Endothelial cell of umbilical vein (primary cell): ENCODE measurements at regions of chr1 and their contacts with region 1.

Region 1: GRCh38 chr1:39132505-39133339 is 71.8 kb upstream of the MACF1 start:
- DNase-seq: peak; percentile 97
- H3K4me3 ChIP-seq: peak overlapping the region in 1 of 3 experiments; percentile 38
- H3K27ac ChIP-seq: peak overlapping the region; percentile 98
- H3K4me1 ChIP-seq: peaks cover 68% of the 10 kb centered on the region
- H3K27me3 ChIP-seq: no peaks in the 10 kb centered on the region
- CTCF ChIP-seq: peak; percentile 68 to 75
- POLR2A ChIP-seq: peak; percentile 32

Region 2: DNA sequence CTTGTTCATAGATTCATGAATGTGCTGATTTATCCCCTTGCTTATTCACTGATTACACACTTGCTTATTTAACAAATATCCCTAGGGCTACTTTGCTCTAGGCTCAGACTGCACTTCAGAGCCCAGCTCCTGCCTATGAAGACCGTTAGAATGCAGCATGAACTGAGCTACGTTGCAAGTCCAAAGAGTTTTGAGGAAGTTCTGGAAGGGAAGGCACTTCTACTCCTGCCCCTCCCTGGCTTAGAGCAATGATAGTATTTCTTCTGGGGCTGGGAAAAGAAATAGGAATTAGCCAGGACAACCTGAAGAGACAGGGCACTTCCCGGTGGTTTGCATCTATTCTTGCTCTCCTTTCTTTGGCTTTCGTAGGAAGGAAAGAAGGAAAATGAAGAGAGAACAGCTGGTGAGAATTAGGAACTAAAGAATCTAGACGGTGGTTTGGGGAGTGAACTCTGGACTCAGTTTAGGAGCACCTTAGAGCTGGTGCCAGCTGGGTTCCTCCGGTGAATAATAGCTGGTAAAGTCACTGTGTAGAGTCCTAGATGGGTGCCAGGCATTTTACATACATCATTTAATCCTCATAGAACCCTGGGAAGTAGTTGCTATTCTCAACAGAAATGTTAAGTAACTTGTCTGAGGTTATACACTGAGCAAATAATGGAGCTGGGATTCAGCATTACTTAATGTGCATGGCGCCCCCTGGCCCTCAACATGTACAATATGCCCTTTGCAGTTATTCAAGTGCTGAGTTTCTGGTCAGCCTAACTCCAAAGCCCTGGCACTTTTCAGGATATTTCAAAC is 40.7 kb before region 1 on chr1:
- CTCF ChIA-PET with region 1: no interaction called
- POLR2A ChIA-PET with region 1: no interaction called
- dilution Hi-C with region 1: no loop called
- intact Hi-C with region 1: no loop called
- DNase-seq: peak; percentile 76
- H3K4me3 ChIP-seq: no peak overlapping the region
- H3K27ac ChIP-seq: no peak overlapping the region
- H3K4me1 ChIP-seq: no peaks in the 10 kb centered on the region
- H3K27me3 ChIP-seq: no peaks in the 10 kb centered on the region
- CTCF ChIP-seq: peak; percentile 64
- POLR2A ChIP-seq: no peak

Region 3: DNA sequence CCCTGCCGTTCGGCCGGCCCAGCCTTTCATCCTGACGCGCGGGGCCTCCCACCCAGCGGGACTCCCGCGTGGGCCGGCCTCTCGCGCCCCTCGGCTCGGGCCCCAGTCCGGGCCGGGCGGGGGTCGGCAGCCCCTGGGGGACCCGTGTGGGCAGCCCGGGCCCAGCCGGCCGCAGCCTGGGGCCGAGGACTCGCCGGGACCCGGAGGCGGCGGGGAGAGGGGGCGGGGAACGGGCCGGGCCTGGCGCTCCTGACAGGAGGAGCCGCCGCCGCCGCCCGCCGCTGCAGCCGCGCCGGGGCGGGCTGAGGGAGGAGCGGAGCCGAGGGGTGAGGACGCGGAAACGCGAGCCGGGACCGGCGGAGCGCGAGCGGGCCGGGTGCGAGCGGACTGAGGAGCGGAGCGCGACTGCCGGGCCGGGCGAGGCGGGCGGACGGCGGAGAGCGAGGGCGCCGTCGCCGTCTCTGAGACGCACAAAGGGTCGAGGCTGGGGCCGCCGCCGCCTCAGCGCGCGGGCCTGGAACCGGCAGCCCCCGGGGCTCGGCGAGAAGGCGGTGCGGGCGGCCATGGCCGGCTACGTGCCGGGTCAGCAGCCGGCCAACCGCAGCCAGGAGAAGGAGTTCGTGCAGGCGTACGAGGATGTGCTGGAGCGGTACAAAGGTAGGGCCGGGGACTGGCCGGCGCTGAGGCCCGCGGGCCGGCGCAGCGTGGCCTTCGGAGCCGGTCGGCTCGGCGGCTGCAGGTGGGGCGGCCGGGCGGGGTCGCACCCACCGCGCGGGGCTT is 27.5 kb before region 1 on chr1:
- CTCF ChIA-PET with region 1: interaction called, 82 read pairs
- POLR2A ChIA-PET with region 1: interaction called, 6 read pairs
- dilution Hi-C with region 1: no loop called
- intact Hi-C with region 1: loop called (anchors 1 kb)
- DNase-seq: peak; percentile 60
- H3K4me3 ChIP-seq: peak overlapping the region; percentile 70 to 79 (median 77)
- H3K27ac ChIP-seq: peak overlapping the region; percentile 82
- H3K4me1 ChIP-seq: peaks cover 53% of the 10 kb centered on the region
- H3K27me3 ChIP-seq: no peaks in the 10 kb centered on the region
- CTCF ChIP-seq: no peak
- POLR2A ChIP-seq: no peak

Region 4: GRCh38 chr1:39151267-39151666 is 18.5 kb after region 1 on chr1:
- CTCF ChIA-PET with region 1: interaction called, 25 read pairs
- POLR2A ChIA-PET with region 1: no interaction called
- dilution Hi-C with region 1: no loop called
- intact Hi-C with region 1: loop called (anchors 1 kb)
- DNase-seq: peak; percentile 59
- H3K4me3 ChIP-seq: peak overlapping the region in 2 of 3 experiments; percentile 10 to 40
- H3K27ac ChIP-seq: peak overlapping the region; percentile 80
- H3K4me1 ChIP-seq: peaks cover 73% of the 10 kb centered on the region
- H3K27me3 ChIP-seq: no peaks in the 10 kb centered on the region
- CTCF ChIP-seq: no peak
- POLR2A ChIP-seq: no peak

Region 5: GRCh38 chr1:39170731-39171667 is 38.3 kb after region 1 on chr1:
- CTCF ChIA-PET with region 1: interaction called, 10 read pairs
- POLR2A ChIA-PET with region 1: no interaction called
- dilution Hi-C with region 1: no loop called
- intact Hi-C with region 1: no loop called
- DNase-seq: no peak
- H3K4me3 ChIP-seq: no peak overlapping the region
- H3K27ac ChIP-seq: no peak overlapping the region
- H3K4me1 ChIP-seq: peaks cover 20% of the 10 kb centered on the region
- H3K27me3 ChIP-seq: no peaks in the 10 kb centered on the region
- CTCF ChIP-seq: no peak
- POLR2A ChIP-seq: no peak

Region 6: GRCh38 chr1:39204441-39205081 is 71.8 kb after region 1 on chr1 and contains the start of gene MACF1:
- CTCF ChIA-PET with region 1: interaction called, 13 read pairs
- POLR2A ChIA-PET with region 1: no interaction called
- dilution Hi-C with region 1: no loop called
- intact Hi-C with region 1: loop called (anchors 1 kb)
- DNase-seq: peak; percentile 93
- H3K4me3 ChIP-seq: peak within 1 kb of the TSS; percentile 2 to 66 (median 7)
- H3K27ac ChIP-seq: peak within 1 kb of the TSS; percentile 86
- H3K4me1 ChIP-seq: peaks cover 37% of the 10 kb centered on the region
- H3K27me3 ChIP-seq: no peaks in the 10 kb centered on the region
- CTCF ChIP-seq: peak; percentile 39 to 55
- POLR2A ChIP-seq: no peak
- total RNA-seq, gene MACF1: 566 and 587 TPM in 2 replicates

Region 7: DNA sequence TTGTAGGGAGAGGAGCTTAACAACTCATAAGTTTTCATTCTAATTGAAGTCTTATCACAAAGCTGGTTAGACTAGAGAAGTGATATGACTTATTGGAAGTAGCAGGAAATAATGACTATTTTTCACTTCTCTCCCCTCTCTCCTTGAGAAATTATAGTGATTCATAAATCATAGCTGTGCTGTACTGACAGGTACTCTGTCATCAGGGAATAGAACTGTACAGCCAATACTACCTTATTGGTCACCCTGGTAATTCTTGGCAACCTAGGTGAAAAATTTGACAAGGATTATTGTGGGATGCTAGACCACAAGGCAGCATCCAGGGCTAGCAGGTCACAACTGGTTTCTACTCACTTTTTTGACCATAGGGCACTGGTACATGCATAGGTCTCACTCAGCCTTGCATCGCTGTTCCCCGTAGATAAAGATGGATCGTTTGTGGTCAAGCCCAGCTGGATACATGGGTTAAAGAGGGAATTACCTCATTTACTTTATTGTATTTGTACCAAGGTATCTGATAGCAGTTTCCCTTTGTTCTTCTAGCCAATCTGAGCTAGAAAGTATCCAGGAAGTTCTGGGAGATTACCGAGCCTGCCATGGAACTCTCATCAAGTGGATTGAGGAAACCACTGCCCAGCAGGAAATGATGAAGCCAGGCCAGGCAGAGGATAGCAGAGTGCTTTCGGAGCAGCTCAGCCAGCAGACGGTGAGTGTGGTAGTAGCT is 185.3 kb after region 1 on chr1:
- CTCF ChIA-PET with region 1: interaction called, 4 read pairs
- POLR2A ChIA-PET with region 1: no interaction called
- dilution Hi-C with region 1: no loop called
- intact Hi-C with region 1: loop called (anchors 1 kb)
- DNase-seq: peak; percentile 91
- H3K4me3 ChIP-seq: peak overlapping the region in 2 of 3 experiments; percentile 3 to 33
- H3K27ac ChIP-seq: peak overlapping the region; percentile 71
- H3K4me1 ChIP-seq: peaks cover 24% of the 10 kb centered on the region
- H3K27me3 ChIP-seq: no peaks in the 10 kb centered on the region
- CTCF ChIP-seq: no peak
- POLR2A ChIP-seq: peak; percentile 31